Activated CD4-positive, alpha-beta T cell treated with anti-CD3 and anti-CD28 coated beads, Interleukin-2, amount 10 ng/mL, durations not matched to agents 24 days and 14 days (primary cell): ENCODE measurements at regions of chr3 and their contacts with region 1.

Region 1: GRCh38 chr3:98039322-98040024 is 4.4 kb upstream of the GABRR3 start:
- DNase-seq: peak; percentile 94
- H3K4me3 Mint-ChIP-seq: peak overlapping the region; percentile 88
- H3K27ac Mint-ChIP-seq: peak overlapping the region; percentile 93
- H3K4me1 Mint-ChIP-seq: peaks cover 18% of the 10 kb centered on the region
- H3K27me3 Mint-ChIP-seq: peaks cover 31% of the 10 kb centered on the region

Region 2: DNA sequence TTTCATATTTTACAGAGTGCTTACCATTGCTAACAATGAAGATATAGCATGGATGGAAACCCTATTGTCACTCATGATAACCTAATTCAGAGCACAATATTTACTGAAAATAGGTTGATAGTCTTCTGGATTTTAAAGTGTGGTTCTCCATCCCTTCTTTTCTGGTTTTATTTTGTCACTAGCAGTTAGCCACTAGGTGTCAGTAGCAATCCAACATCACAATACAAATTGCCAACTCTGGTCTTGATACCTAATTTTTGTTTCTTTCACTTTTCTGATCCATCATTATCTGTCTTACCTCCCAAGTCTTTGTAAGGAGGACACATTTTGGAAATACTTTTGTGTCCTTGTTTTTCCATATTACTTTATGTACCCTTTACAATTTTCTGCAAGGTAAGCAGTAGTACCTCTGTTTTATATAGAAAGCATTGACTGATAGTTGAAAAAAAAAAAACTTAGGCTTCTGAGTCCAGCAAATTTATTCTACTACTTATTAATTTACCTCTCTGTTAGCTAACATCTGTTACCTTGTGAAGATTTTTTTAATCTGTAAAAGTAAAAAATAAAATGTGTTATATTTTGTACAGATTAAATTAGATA is 246.0 kb before region 1 on chr3:
- intact Hi-C with region 1: loop called (anchors 1 kb)
- DNase-seq: peak; percentile 80
- H3K4me3 Mint-ChIP-seq: no peak overlapping the region
- H3K27ac Mint-ChIP-seq: no peak overlapping the region
- H3K4me1 Mint-ChIP-seq: no peaks in the 10 kb centered on the region
- H3K27me3 Mint-ChIP-seq: no peaks in the 10 kb centered on the region

Region 3: GRCh38 chr3:97871801-97872524 is 167.5 kb before region 1 on chr3:
- intact Hi-C with region 1: loop called (anchors 2 kb)
- DNase-seq: peak; percentile 81
- H3K4me3 Mint-ChIP-seq: peak overlapping the region; percentile 62
- H3K27ac Mint-ChIP-seq: peak overlapping the region; percentile 90
- H3K4me1 Mint-ChIP-seq: peaks cover 21% of the 10 kb centered on the region
- H3K27me3 Mint-ChIP-seq: no peaks in the 10 kb centered on the region

Region 4: GRCh38 chr3:98029083-98029482 is 10.4 kb before region 1 on chr3:
- intact Hi-C with region 1: loop called (anchors 1 kb)
- DNase-seq: peak; percentile 60
- H3K4me3 Mint-ChIP-seq: peak overlapping the region; percentile 76
- H3K27ac Mint-ChIP-seq: peak overlapping the region; percentile 90
- H3K4me1 Mint-ChIP-seq: peaks cover 25% of the 10 kb centered on the region
- H3K27me3 Mint-ChIP-seq: no peaks in the 10 kb centered on the region

Region 5: GRCh38 chr3:98329392-98330124 is 290.1 kb after region 1 on chr3:
- intact Hi-C with region 1: loop called (anchors 1 kb)
- DNase-seq: peak; percentile 86
- H3K4me3 Mint-ChIP-seq: no peak overlapping the region
- H3K27ac Mint-ChIP-seq: no peak overlapping the region
- H3K4me1 Mint-ChIP-seq: peaks cover 18% of the 10 kb centered on the region
- H3K27me3 Mint-ChIP-seq: peaks cover 48% of the 10 kb centered on the region

Region 6: DNA sequence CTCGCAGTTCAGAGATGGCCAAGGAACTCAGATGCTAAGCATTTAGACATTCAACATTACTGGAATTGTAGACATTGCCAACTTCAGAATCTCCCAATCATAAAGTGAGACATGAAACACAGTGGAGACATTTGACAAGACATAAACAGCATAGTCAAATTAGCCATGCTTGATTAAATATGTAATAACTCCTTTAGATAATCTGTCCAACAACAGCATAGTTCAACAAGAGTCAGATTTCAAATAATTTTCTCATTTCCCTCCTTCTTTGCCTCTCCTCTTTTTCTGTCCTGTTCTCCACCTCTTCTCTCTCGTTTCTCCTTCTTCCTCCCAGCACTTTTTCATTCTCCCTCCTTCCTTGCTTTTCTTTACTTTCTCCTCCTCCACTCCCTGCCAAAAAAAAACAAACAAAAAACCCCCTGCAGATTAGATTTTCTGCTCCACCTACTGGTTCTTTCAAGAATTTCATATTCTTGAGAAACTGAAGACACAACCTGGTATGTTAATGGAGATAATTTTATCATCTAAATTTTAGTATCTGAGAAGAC is 533.8 kb after region 1 on chr3:
- intact Hi-C with region 1: loop called (anchors 2 kb)
- DNase-seq: peak; percentile 65
- H3K4me3 Mint-ChIP-seq: peak overlapping the region; percentile 59
- H3K27ac Mint-ChIP-seq: peak overlapping the region; percentile 75
- H3K4me1 Mint-ChIP-seq: peaks cover 49% of the 10 kb centered on the region
- H3K27me3 Mint-ChIP-seq: no peaks in the 10 kb centered on the region

Region 7: DNA sequence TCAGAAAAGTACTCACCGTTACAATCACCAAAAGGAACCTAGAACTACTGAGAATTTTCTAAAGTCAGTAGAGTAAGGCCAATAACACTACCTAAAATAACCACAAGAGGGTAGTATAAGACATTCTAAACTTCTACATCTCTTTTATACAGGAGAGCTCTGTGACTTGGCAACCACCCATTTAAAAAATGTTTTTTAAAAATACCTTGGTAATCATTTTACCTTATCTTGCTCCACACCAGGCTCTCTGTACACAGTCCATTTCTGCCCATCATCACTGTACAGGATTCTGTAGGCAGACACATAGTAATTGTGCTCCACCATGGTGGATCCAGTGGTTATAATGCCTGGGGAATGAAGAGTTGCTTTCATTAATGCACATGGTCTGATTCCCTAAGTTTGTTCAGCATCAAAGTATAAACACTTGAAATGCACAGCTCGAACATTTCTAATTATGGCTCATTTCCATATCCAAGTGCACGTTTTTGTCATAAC is 778.1 kb after region 1 on chr3:
- intact Hi-C with region 1: loop called (anchors 1 kb)
- DNase-seq: no peak
- H3K4me3 Mint-ChIP-seq: no peak overlapping the region
- H3K27ac Mint-ChIP-seq: no peak overlapping the region
- H3K4me1 Mint-ChIP-seq: no peaks in the 10 kb centered on the region
- H3K27me3 Mint-ChIP-seq: no peaks in the 10 kb centered on the region